ENCODE measurements at regions of chr10 and their contacts with region 1.

Region 1: DNA sequence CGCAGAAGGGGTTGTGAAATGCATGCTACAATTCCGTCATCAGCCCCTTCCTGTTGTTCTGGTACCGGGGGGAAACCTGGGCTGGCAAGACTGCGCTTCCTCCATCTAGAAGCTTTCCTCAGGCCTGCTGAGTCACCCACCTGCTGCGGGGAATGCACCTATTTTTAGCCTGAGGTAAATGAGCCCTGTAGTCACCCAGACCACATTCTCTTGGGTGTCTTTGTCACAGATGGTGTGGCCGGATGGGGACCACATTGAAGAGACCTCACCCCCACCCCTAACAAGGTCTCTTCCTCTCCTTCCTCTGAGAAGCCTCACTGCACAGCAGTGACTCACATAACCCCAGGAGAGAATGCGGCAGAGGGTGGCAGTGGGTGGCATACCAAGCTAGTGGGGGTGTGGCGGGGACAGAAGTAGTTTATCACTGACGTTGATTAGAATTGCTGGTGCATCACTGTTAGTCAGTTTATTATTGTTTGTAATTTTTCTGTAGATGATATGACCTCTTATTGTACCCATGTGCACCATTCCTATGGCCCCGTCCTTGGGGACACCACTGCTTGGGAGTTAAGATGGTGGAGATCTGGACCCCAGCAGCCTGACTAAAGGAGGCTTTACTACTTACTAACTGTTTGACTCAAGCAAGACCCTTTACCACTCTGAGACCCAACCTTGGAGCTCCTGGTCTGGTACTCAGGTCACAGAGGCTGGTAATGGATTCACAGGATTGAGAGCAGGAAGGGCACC is 83.0 kb upstream of the DUSP5 start:
- DNase-seq: peak; percentile 88 to 99
- H3K4me3 ChIP-seq: no peak overlapping the region
- H3K27ac ChIP-seq: peak overlapping the region; percentile 100
- H3K4me1 ChIP-seq: peaks cover 83% of the 10 kb centered on the region
- H3K27me3 ChIP-seq: no peaks in the 10 kb centered on the region
- CTCF ChIP-seq: no peak

Region 2: GRCh38 chr10:110210674-110211464 is 203.9 kb before region 1 on chr10:
- CTCF ChIA-PET with region 1: no interaction called
- POLR2A ChIA-PET with region 1: no interaction called
- intact Hi-C with region 1: loop called (anchors 5 kb)
- DNase-seq: peak; percentile 93
- H3K4me3 ChIP-seq: peak overlapping the region; percentile 80
- H3K27ac ChIP-seq: peak overlapping the region; percentile 60
- H3K4me1 ChIP-seq: no peaks in the 10 kb centered on the region; the same call in 1 of the 2 replicates
- H3K27me3 ChIP-seq: no peaks in the 10 kb centered on the region
- CTCF ChIP-seq: no peak

Region 3: GRCh38 chr10:110336111-110336721 is 78.5 kb before region 1 on chr10:
- CTCF ChIA-PET with region 1: no interaction called
- POLR2A ChIA-PET with region 1: interaction called, 12 read pairs
- intact Hi-C with region 1: no loop called
- DNase-seq: peak in 1 of 2 experiments; percentile 92
- H3K4me3 ChIP-seq: no peak overlapping the region
- H3K27ac ChIP-seq: peak overlapping the region; percentile 84
- H3K4me1 ChIP-seq: peaks cover 24% of the 10 kb centered on the region
- H3K27me3 ChIP-seq: no peaks in the 10 kb centered on the region
- CTCF ChIP-seq: 0 out of 2 replicates have a peak, but pooled peaks have one; percentile 29

Region 4: DNA sequence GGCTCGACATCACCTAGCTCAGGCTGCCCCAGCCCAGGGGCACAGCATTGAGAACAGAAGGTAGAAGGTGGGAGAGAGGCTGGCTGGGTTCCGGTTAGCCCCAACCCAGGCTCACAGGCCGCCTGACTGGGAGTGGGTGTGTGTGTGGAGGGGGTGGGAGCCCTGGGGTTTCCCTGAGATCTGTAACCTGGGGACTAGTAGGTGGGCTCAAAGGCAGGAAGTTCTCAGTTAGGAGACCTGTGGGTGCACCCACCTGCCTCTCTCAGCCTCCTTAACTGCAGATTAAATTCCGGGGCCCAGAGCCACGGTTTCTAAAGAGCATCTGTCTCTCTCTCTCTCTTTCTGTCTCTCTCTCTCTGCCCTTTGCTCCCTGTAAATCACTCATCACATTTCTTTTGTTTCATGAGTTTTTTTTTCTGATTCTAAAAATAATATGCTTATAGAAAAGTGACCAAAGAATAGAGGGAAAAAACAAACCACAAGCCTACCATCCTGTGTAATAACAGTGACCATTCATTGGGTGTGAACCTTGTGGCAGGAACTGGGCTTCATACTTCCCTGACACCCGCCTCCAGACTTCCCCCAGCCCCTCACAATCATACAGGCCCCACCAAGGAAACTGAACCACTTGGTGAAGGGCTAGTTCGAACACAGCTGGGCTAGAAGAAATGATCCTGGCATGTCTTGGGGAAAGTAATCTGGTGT is 26.6 kb before region 1 on chr10:
- CTCF ChIA-PET with region 1: no interaction called
- POLR2A ChIA-PET with region 1: interaction called, 14 read pairs
- intact Hi-C with region 1: no loop called
- DNase-seq: no peak
- H3K4me3 ChIP-seq: no peak overlapping the region
- H3K27ac ChIP-seq: no peak overlapping the region
- H3K4me1 ChIP-seq: peaks cover 20% of the 10 kb centered on the region
- H3K27me3 ChIP-seq: no peaks in the 10 kb centered on the region
- CTCF ChIP-seq: no peak

Region 5: DNA sequence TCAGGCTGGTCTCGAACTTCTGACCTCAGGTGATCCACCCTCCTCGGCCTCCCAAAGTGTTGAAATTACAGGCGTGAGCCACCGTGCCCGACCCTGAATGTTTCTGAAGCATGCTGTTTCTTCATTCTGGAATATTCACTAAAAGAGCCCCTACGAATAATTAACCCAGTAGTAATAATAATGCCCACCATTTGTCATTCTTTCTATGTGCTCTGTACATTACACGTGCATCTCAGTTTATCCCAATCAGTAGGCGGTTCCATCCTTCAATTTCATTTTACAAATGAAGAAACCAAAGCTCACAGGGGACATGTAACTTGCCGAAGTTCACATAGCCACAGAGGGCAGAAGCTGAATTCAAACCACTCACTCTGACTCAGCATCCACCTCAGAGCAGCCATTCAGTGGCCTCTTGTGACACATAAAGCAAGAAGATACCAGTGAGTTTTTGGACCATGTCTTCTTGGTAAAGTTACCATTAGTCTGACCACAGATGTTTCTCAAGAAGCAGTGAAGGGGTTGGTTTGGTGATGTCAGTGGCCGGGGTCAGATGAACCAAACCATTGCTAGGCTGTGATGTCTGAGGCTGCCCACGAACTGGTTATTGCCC is 11.1 kb after region 1 on chr10:
- CTCF ChIA-PET with region 1: no interaction called
- POLR2A ChIA-PET with region 1: interaction called, 3 read pairs
- intact Hi-C with region 1: loop called (anchors 1 kb)
- DNase-seq: peak; percentile 37 to 78
- H3K4me3 ChIP-seq: no peak overlapping the region
- H3K27ac ChIP-seq: peak overlapping the region; percentile 89
- H3K4me1 ChIP-seq: peaks cover 72% of the 10 kb centered on the region
- H3K27me3 ChIP-seq: no peaks in the 10 kb centered on the region
- CTCF ChIP-seq: no peak

Region 6: DNA sequence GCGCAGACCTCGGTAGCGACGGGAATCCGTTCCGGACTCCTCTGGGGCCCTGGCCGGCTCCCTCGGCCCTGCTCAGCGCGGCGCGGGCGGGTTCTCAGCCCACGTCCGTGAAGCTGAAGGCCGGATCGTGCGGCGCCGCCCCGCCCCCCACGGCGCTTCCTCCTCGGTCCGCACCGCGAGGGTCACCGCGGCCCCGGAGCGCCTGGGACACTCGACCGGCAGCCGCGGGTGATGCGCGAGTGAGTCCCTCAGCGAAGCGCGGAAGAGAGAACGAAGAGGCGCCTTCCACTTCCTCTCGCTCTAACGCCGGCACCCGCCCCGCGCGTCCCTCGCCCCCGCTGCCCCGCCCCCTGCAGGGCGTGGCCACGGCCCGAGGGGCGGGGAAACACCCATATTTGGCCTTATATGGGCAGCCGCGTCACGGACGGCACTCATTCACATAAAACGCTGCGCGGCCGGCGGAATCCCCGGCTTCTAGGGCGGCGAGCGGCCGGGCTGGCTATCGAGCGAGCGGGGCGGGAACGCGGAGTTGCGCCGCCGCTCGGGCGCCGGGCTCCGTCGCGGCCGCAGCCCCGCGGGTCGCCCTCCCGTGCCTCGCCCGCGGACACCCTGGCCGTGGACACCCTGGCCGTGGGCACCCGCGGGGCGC is 82.8 kb after region 1 on chr10 and contains the start of gene DUSP5:
- CTCF ChIA-PET with region 1: interaction called, 4 read pairs
- POLR2A ChIA-PET with region 1: interaction called, 7 read pairs
- intact Hi-C with region 1: loop called (anchors 1 kb)
- DNase-seq: peak; percentile 82 to 91
- H3K4me3 ChIP-seq: peak within 1 kb of the TSS; percentile 98
- H3K27ac ChIP-seq: peak within 1 kb of the TSS; percentile 87
- H3K4me1 ChIP-seq: peaks cover 24% of the 10 kb centered on the region
- H3K27me3 ChIP-seq: no peaks in the 10 kb centered on the region
- CTCF ChIP-seq: no peak
- total RNA-seq, gene DUSP5: 14.2 and 19.0 TPM in 2 replicates